Activated T-helper 1 cell treated with anti-CD3 and anti-CD28 coated beads, Interleukin-12 subunit alpha, Interleukin-12 subunit beta, Interleukin-2, Interleukin-4 antibody, amounts not matched to agents 30 ng/mL and 10 ng/mL and 1 ng/mL, durations not matched to agents 14 hours and 24 hours and 36 hours (primary cell): ENCODE measurements at regions of chr7 and their contacts with region 1.

Region 1: GRCh38 chr7:96837593-96837992 is 127.9 kb upstream of the SEM1 start:
- DNase-seq: peak; percentile 17
- H3K4me3 Mint-ChIP-seq: peak overlapping the region; percentile 57
- H3K27ac Mint-ChIP-seq: peak overlapping the region; percentile 74
- H3K4me1 Mint-ChIP-seq: peaks cover 15% of the 10 kb centered on the region
- H3K27me3 Mint-ChIP-seq: peaks cover 31% of the 10 kb centered on the region

Region 2: GRCh38 chr7:95501261-95501832 is 1336.2 kb before region 1 on chr7:
- intact Hi-C with region 1: loop called (anchors 5 kb)
- DNase-seq: peak; percentile 22
- H3K4me3 Mint-ChIP-seq: peak overlapping the region; percentile 20
- H3K27ac Mint-ChIP-seq: peak overlapping the region; percentile 79
- H3K4me1 Mint-ChIP-seq: peaks cover 45% of the 10 kb centered on the region
- H3K27me3 Mint-ChIP-seq: peaks cover 4% of the 10 kb centered on the region

Region 3: DNA sequence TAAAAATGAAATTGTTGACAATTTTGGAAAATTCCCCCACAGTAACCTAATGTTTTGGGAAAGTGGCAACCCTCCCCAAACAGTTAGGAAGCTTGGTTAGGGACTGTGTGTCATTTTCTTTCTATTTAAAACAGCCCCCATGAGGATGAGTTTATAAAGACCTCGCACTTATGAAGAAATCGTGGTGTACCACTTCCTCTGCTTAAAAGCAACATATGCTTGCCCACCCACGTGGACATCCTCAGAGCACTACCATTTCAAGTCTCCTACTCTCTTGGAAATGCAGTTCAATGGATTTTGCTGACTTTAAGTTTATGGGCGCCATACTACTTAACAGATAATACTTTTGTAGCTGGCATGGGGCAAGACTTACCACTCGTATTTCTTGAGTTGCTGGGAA is 841.4 kb before region 1 on chr7:
- intact Hi-C with region 1: no loop called
- DNase-seq: no peak
- H3K4me3 Mint-ChIP-seq: no peak overlapping the region
- H3K27ac Mint-ChIP-seq: no peak overlapping the region
- H3K4me1 Mint-ChIP-seq: no peaks in the 10 kb centered on the region
- H3K27me3 Mint-ChIP-seq: no peaks in the 10 kb centered on the region

Region 4: DNA sequence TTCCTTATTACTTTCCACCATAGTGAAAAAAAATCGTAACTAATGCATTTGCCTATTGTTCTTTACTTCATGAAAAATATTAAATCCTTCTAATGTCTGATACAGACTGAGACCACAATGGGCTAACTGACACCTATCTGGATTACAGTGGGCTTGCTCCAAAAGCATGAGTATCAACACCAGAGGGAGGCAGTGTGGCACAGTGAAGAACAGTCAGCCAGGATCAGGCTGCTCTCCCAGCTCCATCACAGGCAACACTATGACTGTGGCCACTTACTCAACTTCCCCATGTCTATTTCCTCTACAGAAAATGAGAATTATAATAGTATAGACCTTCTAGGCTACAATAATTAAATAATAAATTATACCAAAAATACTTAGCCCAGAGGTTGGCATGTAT is 612.9 kb before region 1 on chr7:
- intact Hi-C with region 1: no loop called
- DNase-seq: no peak
- H3K4me3 Mint-ChIP-seq: no peak overlapping the region
- H3K27ac Mint-ChIP-seq: no peak overlapping the region
- H3K4me1 Mint-ChIP-seq: no peaks in the 10 kb centered on the region
- H3K27me3 Mint-ChIP-seq: no peaks in the 10 kb centered on the region

Region 5: GRCh38 chr7:96709381-96710228 is 128.0 kb before region 1 on chr7 and contains the start of gene SEM1:
- intact Hi-C with region 1: loop called (anchors 5 kb)
- DNase-seq: peak; percentile 53
- H3K4me3 Mint-ChIP-seq: peak within 1 kb of the TSS; percentile 99
- H3K27ac Mint-ChIP-seq: peak within 1 kb of the TSS; percentile 98
- H3K4me1 Mint-ChIP-seq: peaks cover 14% of the 10 kb centered on the region
- H3K27me3 Mint-ChIP-seq: no peaks in the 10 kb centered on the region
- total RNA-seq, gene SEM1: 41.2 and 42.8 TPM in 2 replicates

Region 6: DNA sequence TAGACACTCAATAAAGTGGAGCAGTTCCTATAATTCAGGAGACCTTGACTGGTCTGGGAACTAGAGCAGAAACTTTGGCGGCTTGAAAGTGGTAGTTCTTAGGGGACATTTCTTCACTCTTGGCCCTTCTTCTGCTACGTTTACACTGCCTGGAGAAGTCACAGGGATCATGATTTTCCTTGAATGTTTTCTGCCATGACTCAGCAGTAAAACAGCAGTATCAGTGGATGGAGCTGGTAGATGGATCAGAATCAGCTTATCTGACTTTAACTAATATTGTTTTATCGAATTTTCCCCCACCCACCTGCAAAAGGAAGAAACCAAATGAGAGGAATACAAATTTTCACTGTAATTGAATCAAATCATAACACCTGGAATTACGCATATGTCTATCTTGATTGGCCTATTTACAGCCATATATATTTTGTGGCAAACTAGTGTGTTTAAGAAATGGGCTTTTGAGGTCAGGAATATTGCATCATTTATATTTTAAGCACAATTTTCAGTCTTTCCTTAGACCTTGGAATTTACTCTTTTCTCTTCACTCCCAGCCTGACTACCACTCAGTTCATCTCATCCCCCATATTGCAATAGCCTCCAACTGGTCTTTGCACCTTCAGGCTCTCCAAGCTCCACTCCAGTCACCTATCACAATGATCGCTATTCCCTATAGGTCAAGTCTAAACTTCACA is 201.9 kb after region 1 on chr7:
- intact Hi-C with region 1: no loop called
- DNase-seq: no peak
- H3K4me3 Mint-ChIP-seq: no peak overlapping the region
- H3K27ac Mint-ChIP-seq: no peak overlapping the region
- H3K4me1 Mint-ChIP-seq: no peaks in the 10 kb centered on the region
- H3K27me3 Mint-ChIP-seq: peaks cover 15% of the 10 kb centered on the region